ENCODE measurements at regions of chr3 and their contacts with region 1.

Region 1: DNA sequence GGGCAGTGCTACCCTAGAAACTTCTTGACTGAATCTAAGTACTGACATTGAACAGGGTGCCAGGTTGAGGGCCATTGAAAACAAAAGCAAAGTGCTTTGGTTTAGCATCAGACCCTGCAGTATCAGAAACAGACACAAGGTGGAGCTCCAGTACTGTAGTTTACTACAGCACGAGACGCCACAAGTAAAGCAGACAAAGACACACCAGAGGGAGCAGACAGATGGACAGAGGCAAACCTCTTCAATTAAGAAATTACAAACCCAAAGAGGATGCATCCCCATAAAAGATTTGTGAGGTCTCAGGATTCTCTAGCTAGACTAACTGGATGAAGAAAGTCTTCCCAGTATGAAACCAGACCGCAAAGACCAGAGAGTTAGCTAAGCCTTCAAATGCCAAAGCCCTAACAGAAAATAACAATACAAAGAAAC is 16.6 kb downstream of the TOP2B start:
- DNase-seq: peak; percentile 77
- ATAC-seq: peak; percentile 98
- H3K4me3 ChIP-seq: no peak overlapping the region
- H3K27ac ChIP-seq: no peak overlapping the region
- H3K4me1 ChIP-seq: no peaks in the 10 kb centered on the region
- H3K27me3 ChIP-seq: no peaks in the 10 kb centered on the region
- CTCF ChIP-seq: peak; percentile 93
- EP300 ChIP-seq: no peak
- POLR2A ChIP-seq: no peak
- RAD21 ChIP-seq: peak; percentile 90

Region 2: DNA sequence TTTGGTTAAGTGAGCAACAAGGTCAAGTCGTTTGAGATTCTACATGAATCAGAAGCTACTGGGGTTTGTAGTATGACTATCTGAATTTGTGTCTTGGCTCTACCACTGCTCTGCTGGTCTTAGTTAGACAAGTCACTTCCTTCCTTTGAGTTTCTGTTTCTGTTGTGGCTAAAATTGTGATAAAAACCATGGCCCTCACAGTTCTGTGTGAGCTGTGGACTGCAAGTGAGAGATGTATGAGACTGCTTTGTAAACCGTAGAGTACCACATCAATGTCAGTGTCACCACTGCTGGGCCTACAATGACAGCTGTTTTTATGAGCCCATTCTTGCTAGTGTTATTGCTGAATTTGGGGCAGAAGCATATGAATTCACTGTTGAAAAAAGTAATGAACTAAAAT is 187.4 kb before region 1 on chr3:
- CTCF ChIA-PET with region 1: no interaction called
- POLR2A ChIA-PET with region 1: no interaction called
- in situ Hi-C with region 1: no loop called
- intact Hi-C with region 1: no loop called
- DNase-seq: no peak
- ATAC-seq: no peak
- H3K4me3 ChIP-seq: no peak overlapping the region
- H3K27ac ChIP-seq: no peak overlapping the region
- H3K4me1 ChIP-seq: no peaks in the 10 kb centered on the region
- H3K27me3 ChIP-seq: no peaks in the 10 kb centered on the region
- CTCF ChIP-seq: no peak
- EP300 ChIP-seq: no peak
- POLR2A ChIP-seq: no peak
- RAD21 ChIP-seq: no peak

Region 3: DNA sequence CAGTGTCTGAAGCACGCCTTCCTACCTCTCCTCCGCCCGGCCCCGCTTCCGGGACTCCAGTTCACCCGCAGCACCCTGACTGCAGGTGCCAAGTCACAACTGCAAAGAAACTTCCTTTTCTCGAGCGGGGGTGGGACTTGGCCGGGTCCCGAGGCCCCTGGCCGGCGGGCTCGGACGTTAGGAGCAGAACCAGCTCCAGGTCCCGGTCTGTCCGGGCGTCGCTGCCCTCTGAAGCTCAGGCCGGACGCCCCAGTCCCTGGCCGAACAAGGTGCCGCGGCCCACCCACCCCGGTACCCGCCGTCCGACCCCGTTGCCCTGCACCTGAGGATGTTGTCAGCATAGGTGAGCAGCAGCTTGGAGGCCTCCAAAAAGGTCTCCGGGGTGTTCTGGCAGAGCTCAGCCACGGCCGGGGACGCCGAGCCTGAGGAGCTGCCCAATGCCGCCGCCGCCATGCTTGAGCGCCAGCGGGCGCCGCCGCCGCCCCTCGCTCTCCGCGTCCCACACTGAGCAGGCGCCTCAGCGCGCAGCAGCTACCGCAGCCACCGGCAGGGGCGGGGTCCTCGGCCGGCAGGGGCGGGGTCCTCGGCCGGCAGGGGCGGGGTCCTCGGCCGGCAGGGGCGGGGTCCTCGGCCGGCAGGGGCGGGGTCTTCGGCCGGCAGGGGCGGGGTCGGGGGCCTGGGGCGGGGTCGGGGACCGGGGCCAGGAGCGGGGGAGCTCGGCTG is 135.0 kb after region 1 on chr3 and contains the start of gene NGLY1:
- CTCF ChIA-PET with region 1: no interaction called
- POLR2A ChIA-PET with region 1: no interaction called
- in situ Hi-C with region 1: loop called (anchors 25 kb)
- intact Hi-C with region 1: loop called (anchors 5 kb)
- DNase-seq: peak; percentile 59
- ATAC-seq: peak; percentile 97
- H3K4me3 ChIP-seq: peak within 1 kb of the TSS; percentile 91 to 99 (median 93)
- H3K27ac ChIP-seq: peak within 1 kb of the TSS; percentile 78
- H3K4me1 ChIP-seq: peaks cover 56% of the 10 kb centered on the region
- H3K27me3 ChIP-seq: no peaks in the 10 kb centered on the region
- CTCF ChIP-seq: 0 out of 2 replicates have a peak, but pooled peaks have one; percentile 2
- EP300 ChIP-seq: no peak
- POLR2A ChIP-seq: peak; percentile 75 to 93
- RAD21 ChIP-seq: no peak
- total RNA-seq, gene NGLY1: 44.5 and 53.6 TPM in 2 replicates

Region 4: GRCh38 chr3:25856902-25857518 is 208.9 kb after region 1 on chr3:
- CTCF ChIA-PET with region 1: interaction called, 44 read pairs
- POLR2A ChIA-PET with region 1: no interaction called
- in situ Hi-C with region 1: loop called (anchors 5 kb)
- intact Hi-C with region 1: loop called (anchors 1 kb)
- DNase-seq: peak; percentile 23
- ATAC-seq: peak; percentile 83
- H3K4me3 ChIP-seq: no peak overlapping the region
- H3K27ac ChIP-seq: no peak overlapping the region
- H3K4me1 ChIP-seq: no peaks in the 10 kb centered on the region
- H3K27me3 ChIP-seq: no peaks in the 10 kb centered on the region
- CTCF ChIP-seq: peak; percentile 70
- EP300 ChIP-seq: no peak
- POLR2A ChIP-seq: no peak
- RAD21 ChIP-seq: no peak

Region 5: DNA sequence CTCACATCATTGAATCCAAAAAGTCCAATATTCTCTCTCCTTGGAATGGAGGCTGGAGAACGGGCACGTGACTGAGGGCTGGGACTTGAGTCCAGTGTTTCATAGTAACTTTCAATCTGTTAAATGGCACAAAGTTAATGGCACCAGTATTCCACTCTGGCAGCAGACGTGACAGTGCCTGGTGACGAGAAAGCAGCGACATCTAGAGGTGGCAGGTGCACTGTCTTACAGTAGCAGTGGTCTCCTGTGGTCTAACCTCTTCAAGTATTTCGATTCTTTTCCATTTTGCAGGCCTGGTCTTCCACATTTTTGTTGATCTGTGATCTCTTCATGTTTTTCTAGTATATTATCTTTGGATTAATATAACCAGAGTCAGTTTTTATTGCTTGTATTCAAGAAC is 248.9 kb after region 1 on chr3:
- CTCF ChIA-PET with region 1: interaction called, 5 read pairs
- POLR2A ChIA-PET with region 1: no interaction called
- in situ Hi-C with region 1: no loop called
- intact Hi-C with region 1: loop called (anchors 1 kb)
- DNase-seq: peak; percentile 20
- ATAC-seq: peak; percentile 96
- H3K4me3 ChIP-seq: no peak overlapping the region
- H3K27ac ChIP-seq: no peak overlapping the region
- H3K4me1 ChIP-seq: no peaks in the 10 kb centered on the region
- H3K27me3 ChIP-seq: no peaks in the 10 kb centered on the region
- CTCF ChIP-seq: peak; percentile 83
- EP300 ChIP-seq: no peak
- POLR2A ChIP-seq: no peak
- RAD21 ChIP-seq: 0 out of 2 replicates have a peak, but pooled peaks have one; percentile 13

Region 6: GRCh38 chr3:25962249-25962648 is 314.1 kb after region 1 on chr3:
- CTCF ChIA-PET with region 1: interaction called, 8 read pairs
- POLR2A ChIA-PET with region 1: no interaction called
- in situ Hi-C with region 1: no loop called
- intact Hi-C with region 1: loop called (anchors 1 kb)
- DNase-seq: peak; percentile 6
- ATAC-seq: peak; percentile 86
- H3K4me3 ChIP-seq: no peak overlapping the region
- H3K27ac ChIP-seq: no peak overlapping the region
- H3K4me1 ChIP-seq: no peaks in the 10 kb centered on the region
- H3K27me3 ChIP-seq: no peaks in the 10 kb centered on the region
- CTCF ChIP-seq: peak; percentile 46
- EP300 ChIP-seq: no peak
- POLR2A ChIP-seq: no peak
- RAD21 ChIP-seq: no peak

Region 7: GRCh38 chr3:26712211-26713026 is 1064.3 kb after region 1 on chr3:
- CTCF ChIA-PET with region 1: no interaction called
- POLR2A ChIA-PET with region 1: no interaction called
- in situ Hi-C with region 1: no loop called
- intact Hi-C with region 1: loop called (anchors 10 kb)
- DNase-seq: peak; percentile 34
- ATAC-seq: peak; percentile 83
- H3K4me3 ChIP-seq: no peak overlapping the region
- H3K27ac ChIP-seq: no peak overlapping the region
- H3K4me1 ChIP-seq: no peaks in the 10 kb centered on the region
- H3K27me3 ChIP-seq: no peaks in the 10 kb centered on the region
- CTCF ChIP-seq: peak; percentile 63
- EP300 ChIP-seq: no peak
- POLR2A ChIP-seq: no peak
- RAD21 ChIP-seq: no peak

Measured in HepG2 (cell line).